ENCODE measurements at regions of chr1 and their contacts with region 1.

Region 1: DNA sequence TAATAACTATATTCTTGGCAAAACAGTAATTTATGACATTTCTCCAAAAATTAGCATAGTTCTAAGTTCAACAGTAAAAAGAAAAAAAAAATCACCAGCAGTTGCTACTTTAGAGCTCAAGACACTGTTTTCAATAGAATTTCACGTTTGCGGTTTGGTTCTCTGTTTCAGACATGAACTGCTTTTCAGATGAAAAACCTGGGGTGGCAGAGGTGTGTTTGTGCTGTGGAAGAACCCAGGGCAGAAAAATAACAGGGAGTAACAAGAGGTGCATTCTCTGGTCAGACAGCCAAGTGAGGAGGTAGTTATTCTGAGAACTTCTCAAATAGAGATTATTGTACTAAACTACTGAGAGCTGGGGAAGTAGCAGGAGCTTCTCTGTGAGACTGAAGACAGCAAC is 9.0 kb downstream of the NRAS start:
- DNase-seq: no peak
- H3K4me3 ChIP-seq: no peak overlapping the region
- H3K27ac ChIP-seq: no peak overlapping the region
- H3K4me1 ChIP-seq: no peaks in the 10 kb centered on the region
- H3K27me3 ChIP-seq: no peaks in the 10 kb centered on the region
- CTCF ChIP-seq: no peak

Region 2: DNA sequence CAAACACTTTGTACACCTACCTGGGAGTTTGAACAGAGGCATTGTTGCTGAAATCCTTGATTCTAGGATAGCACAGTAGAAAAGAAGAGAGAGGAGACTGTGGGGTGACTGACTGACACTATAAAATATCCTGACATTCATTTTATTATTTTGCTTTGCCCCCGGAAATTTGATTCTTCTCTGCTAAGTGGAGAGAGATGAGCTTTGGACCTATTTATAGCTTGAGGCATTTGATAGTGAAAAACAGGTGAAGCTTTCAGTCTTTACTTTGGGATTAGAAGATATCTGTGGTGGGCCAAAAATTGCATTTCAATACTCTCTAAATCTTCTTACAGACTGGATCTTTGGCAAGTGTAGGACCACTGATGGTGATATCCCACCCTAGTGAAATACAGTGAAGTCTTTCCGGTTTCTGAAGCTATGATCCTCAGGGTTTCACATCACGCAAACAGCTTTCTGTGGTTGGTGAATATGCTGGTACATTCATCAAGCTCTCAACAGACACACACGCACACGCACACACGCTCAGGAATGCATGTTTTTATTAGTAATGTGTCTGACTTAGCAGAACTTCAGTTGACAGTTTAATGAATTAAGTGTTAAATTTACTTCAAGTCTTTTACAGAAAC is 12.1 kb before region 1 on chr1 and contains the start of gene AMPD1:
- CTCF ChIA-PET with region 1: no interaction called
- POLR2A ChIA-PET with region 1: interaction called, 10 read pairs
- intact Hi-C with region 1: no loop called
- DNase-seq: no peak
- H3K4me3 ChIP-seq: no peak within 1 kb of the TSS
- H3K27ac ChIP-seq: no peak within 1 kb of the TSS
- H3K4me1 ChIP-seq: no peaks in the 10 kb centered on the region
- H3K27me3 ChIP-seq: no peaks in the 10 kb centered on the region
- CTCF ChIP-seq: no peak
- total RNA-seq, gene AMPD1: 0.19 and 0.37 TPM in 2 replicates

Measured in A673 (cell line).